Psoas muscle (tissue), 8 donors: ENCODE measurements at regions of chr11 and their contacts with region 1.

Region 1: GRCh38 chr11:108697872-108698473 is 33.1 kb downstream of the DDX10 start:
- DNase-seq: peak in 1 of 2 donors; percentile 23
- ATAC-seq: peak; percentile 78 to 95 (median 82)
- H3K4me3 ChIP-seq: no peak overlapping the region
- H3K27ac ChIP-seq: no peak overlapping the region
- H3K4me1 ChIP-seq: no peaks in the 10 kb centered on the region
- H3K27me3 ChIP-seq: no peaks in the 10 kb centered on the region
- CTCF ChIP-seq: peak; percentile 89

Region 2: GRCh38 chr11:108647701-108648527 is 50.1 kb before region 1 on chr11:
- intact Hi-C with region 1: no loop called
- DNase-seq: peak; percentile 49 to 66
- ATAC-seq: peak; percentile 87 to 93 (median 90)
- H3K4me3 ChIP-seq: no peak overlapping the region
- H3K27ac ChIP-seq: peak overlapping the region; percentile 34
- H3K4me1 ChIP-seq: peaks cover 3% of the 10 kb centered on the region
- H3K27me3 ChIP-seq: no peaks in the 10 kb centered on the region
- CTCF ChIP-seq: peak; percentile 71

Region 3: DNA sequence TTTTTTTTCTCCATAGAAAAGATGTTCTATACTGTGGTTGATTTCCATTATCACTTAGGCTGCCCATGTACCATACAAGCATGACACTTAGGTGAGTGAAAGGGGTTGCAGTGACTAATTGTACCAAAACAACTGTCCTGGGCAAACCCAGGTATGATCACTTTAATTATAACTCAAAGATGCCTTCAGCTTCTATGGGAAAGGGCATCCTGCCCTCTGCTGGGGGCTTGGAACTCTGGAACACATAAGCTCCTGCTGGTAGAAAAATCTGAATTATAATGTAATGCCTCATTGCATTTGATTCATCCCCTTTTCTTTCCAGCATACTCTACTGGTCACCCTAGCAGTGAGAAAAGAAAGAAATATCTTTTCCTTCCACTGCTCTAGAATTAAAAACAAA is 173.2 kb after region 1 on chr11:
- intact Hi-C with region 1: loop called in 1 of 2 experiments (anchors 5 kb)
- DNase-seq: no peak
- ATAC-seq: no peak
- H3K4me3 ChIP-seq: no peak overlapping the region
- H3K27ac ChIP-seq: no peak overlapping the region
- H3K4me1 ChIP-seq: no peaks in the 10 kb centered on the region
- H3K27me3 ChIP-seq: no peaks in the 10 kb centered on the region
- CTCF ChIP-seq: peak; percentile 45

Region 4: GRCh38 chr11:109132539-109132938 is 434.6 kb after region 1 on chr11:
- intact Hi-C with region 1: loop called in 1 of 2 experiments (anchors 5 kb)
- DNase-seq: no peak
- ATAC-seq: no peak
- H3K4me3 ChIP-seq: no peak overlapping the region
- H3K27ac ChIP-seq: no peak overlapping the region
- H3K4me1 ChIP-seq: no peaks in the 10 kb centered on the region
- H3K27me3 ChIP-seq: no peaks in the 10 kb centered on the region
- CTCF ChIP-seq: no peak

Region 5: GRCh38 chr11:109697140-109697843 is 999.3 kb after region 1 on chr11:
- intact Hi-C with region 1: loop called in 1 of 2 experiments (anchors 5 kb)
- DNase-seq: no peak
- ATAC-seq: peak in 1 of 4 donors; percentile 63
- H3K4me3 ChIP-seq: no peak overlapping the region
- H3K27ac ChIP-seq: no peak overlapping the region
- H3K4me1 ChIP-seq: no peaks in the 10 kb centered on the region
- H3K27me3 ChIP-seq: no peaks in the 10 kb centered on the region
- CTCF ChIP-seq: peak; percentile 34

Region 6: GRCh38 chr11:109939166-109939810 is 1241.3 kb after region 1 on chr11:
- intact Hi-C with region 1: loop called (anchors 10 kb)
- DNase-seq: no peak
- ATAC-seq: peak; percentile 70 to 91 (median 84)
- H3K4me3 ChIP-seq: no peak overlapping the region
- H3K27ac ChIP-seq: no peak overlapping the region
- H3K4me1 ChIP-seq: peaks cover 6% of the 10 kb centered on the region
- H3K27me3 ChIP-seq: no peaks in the 10 kb centered on the region
- CTCF ChIP-seq: peak; percentile 61